ENCODE measurements at regions of chr1 and their contacts with region 1.

Region 1: GRCh38 chr1:86704458-86704971 is at the start of gene SH3GLB1:
- DNase-seq: peak; percentile 91
- H3K4me3 ChIP-seq: peak within 1 kb of the TSS; percentile 84 to 92
- H3K27ac ChIP-seq: peak within 1 kb of the TSS; percentile 89 to 93
- H3K4me1 ChIP-seq: peaks cover 0 to 8% of the 10 kb centered on the region in 2 experiments; a peak in 2 of 4 replicates
- H3K27me3 ChIP-seq: no peaks in the 10 kb centered on the region
- CTCF ChIP-seq: peak; percentile 88
- EP300 ChIP-seq: peak in 1 of 2 experiments; percentile 28; a peak in 1 of 4 replicates
- RAD21 ChIP-seq: peak; percentile 50
- polyA plus RNA-seq, gene SH3GLB1: 13.2 and 16.3 TPM in 2 replicates

Region 2: DNA sequence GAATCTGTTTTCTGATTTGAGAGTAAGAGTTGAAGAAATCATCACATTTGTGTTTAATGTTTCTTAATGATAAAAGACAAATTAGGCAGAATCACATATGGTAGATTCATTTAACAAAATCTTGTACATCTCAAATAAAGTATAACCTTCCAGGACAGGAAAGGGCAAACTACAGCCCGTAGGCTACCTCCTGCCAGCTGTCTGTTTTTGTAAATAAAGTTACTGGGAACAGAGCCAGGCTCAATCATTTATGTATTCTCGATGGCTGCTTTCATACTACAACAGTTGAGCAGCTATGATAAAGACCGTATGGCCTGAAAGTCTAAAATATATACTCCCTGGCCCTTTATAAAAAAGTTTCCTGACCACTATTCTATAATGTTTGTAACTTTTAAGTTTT is 752.1 kb before region 1 on chr1:
- CTCF ChIA-PET with region 1: no interaction called
- POLR2A ChIA-PET with region 1: no interaction called
- DNase-seq: peak; percentile 64
- H3K4me3 ChIP-seq: no peak overlapping the region
- H3K27ac ChIP-seq: peak overlapping the region in 1 of 2 experiments; percentile 75; a peak in 2 of 4 replicates
- H3K4me1 ChIP-seq: peaks cover 0 to 14% of the 10 kb centered on the region in 2 experiments; a peak in 2 of 4 replicates
- H3K27me3 ChIP-seq: no peaks in the 10 kb centered on the region; the same call in 1 of the 2 replicates
- CTCF ChIP-seq: no peak
- EP300 ChIP-seq: peak in 1 of 2 experiments; percentile 93; a peak in 2 of 4 replicates
- RAD21 ChIP-seq: no peak

Region 3: DNA sequence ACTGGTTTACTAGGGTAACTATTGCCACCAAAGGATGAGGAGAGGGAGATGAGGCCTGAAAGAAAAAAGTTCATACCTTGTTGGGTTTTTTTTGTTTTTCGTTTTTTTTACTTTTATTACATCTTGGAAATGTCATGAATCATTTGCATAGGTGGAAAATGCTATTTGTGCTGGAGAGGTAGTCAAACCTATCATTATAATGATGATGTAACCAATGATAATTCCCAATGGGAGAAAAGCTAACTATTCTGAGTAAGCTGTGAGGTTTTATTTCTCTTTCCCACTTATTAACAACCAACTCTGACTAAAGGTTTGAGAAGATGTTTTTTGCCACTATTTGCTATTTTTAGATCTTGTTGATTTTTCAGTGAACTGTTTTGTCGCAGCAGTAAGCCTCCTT is 28.8 kb after region 1 on chr1:
- CTCF ChIA-PET with region 1: interaction called, 35 read pairs
- POLR2A ChIA-PET with region 1: interaction called, 3 read pairs
- DNase-seq: no peak
- H3K4me3 ChIP-seq: no peak overlapping the region
- H3K27ac ChIP-seq: peak overlapping the region in 1 of 2 experiments; percentile 55; a peak in 2 of 4 replicates
- H3K4me1 ChIP-seq: no peaks in the 10 kb centered on the region; a peak in 1 of 4 replicates
- H3K27me3 ChIP-seq: no peaks in the 10 kb centered on the region
- CTCF ChIP-seq: no peak
- EP300 ChIP-seq: no peak
- RAD21 ChIP-seq: no peak

Region 4: DNA sequence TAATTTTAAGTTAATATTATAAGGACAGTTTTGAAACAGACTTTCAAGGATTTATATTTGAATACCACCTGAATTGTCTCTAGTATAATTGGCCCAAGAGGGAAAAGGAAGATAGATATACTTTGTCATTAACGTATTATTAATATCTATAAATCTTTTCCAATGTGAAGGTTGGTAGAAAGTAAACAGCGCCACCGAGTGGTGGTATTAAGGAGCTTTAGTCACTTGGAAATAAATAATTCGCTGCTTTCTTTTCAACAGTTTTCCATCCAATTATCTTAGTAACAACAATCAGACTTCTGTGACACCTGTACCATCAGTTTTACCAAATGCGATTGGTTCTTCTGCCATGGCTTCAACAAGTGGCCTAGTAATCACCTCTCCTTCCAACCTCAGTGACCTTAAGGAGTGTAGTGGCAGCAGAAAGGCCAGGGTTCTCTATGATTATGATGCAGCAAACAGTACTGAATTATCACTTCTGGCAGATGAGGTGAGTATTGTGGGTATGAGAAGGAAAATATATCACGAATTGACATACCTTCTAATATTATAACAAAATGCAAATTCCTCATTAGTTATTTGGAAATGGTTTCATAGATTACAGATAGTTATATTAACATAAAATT is 37.5 kb after region 1 on chr1:
- CTCF ChIA-PET with region 1: interaction called, 28 read pairs
- POLR2A ChIA-PET with region 1: no interaction called
- DNase-seq: peak; percentile 21
- H3K4me3 ChIP-seq: no peak overlapping the region; a peak in 1 of 4 replicates
- H3K27ac ChIP-seq: no peak overlapping the region
- H3K4me1 ChIP-seq: no peaks in the 10 kb centered on the region
- H3K27me3 ChIP-seq: no peaks in the 10 kb centered on the region
- CTCF ChIP-seq: peak; percentile 83
- EP300 ChIP-seq: no peak
- RAD21 ChIP-seq: peak; percentile 73

Region 5: DNA sequence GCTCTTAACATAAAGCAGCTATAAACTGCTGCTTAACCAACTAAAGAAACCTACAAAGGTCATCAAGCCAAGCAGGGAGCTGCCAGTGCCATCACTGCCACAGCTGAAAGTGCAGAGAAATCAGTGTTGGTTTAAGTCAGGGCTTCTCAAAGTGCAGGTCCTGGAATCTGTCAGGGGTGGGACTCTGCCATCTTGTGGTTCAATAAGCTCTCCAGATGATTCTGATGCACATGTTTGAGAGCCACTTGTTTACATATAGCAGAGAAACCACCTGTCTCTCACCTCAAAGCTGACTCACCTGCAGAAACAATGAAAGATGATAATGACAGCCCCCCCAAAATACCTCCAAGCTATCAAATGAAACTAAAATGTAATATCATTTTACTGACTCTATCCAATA is 49.2 kb after region 1 on chr1:
- CTCF ChIA-PET with region 1: interaction called, 15 read pairs
- POLR2A ChIA-PET with region 1: no interaction called
- DNase-seq: peak; percentile 20
- H3K4me3 ChIP-seq: no peak overlapping the region
- H3K27ac ChIP-seq: no peak overlapping the region
- H3K4me1 ChIP-seq: peaks cover 0 to 3% of the 10 kb centered on the region in 2 experiments; a peak in 1 of 4 replicates
- H3K27me3 ChIP-seq: no peaks in the 10 kb centered on the region
- CTCF ChIP-seq: no peak; the same call in 1 of the 2 replicates
- EP300 ChIP-seq: no peak
- RAD21 ChIP-seq: 0 out of 2 replicates have a peak, but pooled peaks have one; percentile 30

Measured in SK-N-SH (cell line).